Activated CD8-positive, alpha-beta memory T cell treated with anti-CD3 and anti-CD28 coated beads, Interleukin-2, amount 10 ng/mL, durations not matched to agents 7 days and 5 days (primary cell): ENCODE measurements at regions of chr1 and their contacts with region 1.

Region 1: GRCh38 chr1:92485381-92486257 is 1.1 kb downstream of the GFI1 start:
- DNase-seq: peak; percentile 95
- ATAC-seq: peak; percentile 58
- H3K4me3 Mint-ChIP-seq: peak overlapping the region; percentile 95
- H3K27ac Mint-ChIP-seq: peak overlapping the region; percentile 94
- H3K4me1 Mint-ChIP-seq: peaks cover 32% of the 10 kb centered on the region
- H3K27me3 Mint-ChIP-seq: no peaks in the 10 kb centered on the region

Region 2: GRCh38 chr1:92367496-92367895 is 118.1 kb before region 1 on chr1:
- CTCF ChIA-PET with region 1: interaction called, 12 read pairs
- DNase-seq: peak; percentile 51
- ATAC-seq: peak; percentile 49
- H3K4me3 Mint-ChIP-seq: peak overlapping the region; percentile 33
- H3K27ac Mint-ChIP-seq: peak overlapping the region; percentile 91
- H3K4me1 Mint-ChIP-seq: peaks cover 57% of the 10 kb centered on the region
- H3K27me3 Mint-ChIP-seq: no peaks in the 10 kb centered on the region

Region 3: DNA sequence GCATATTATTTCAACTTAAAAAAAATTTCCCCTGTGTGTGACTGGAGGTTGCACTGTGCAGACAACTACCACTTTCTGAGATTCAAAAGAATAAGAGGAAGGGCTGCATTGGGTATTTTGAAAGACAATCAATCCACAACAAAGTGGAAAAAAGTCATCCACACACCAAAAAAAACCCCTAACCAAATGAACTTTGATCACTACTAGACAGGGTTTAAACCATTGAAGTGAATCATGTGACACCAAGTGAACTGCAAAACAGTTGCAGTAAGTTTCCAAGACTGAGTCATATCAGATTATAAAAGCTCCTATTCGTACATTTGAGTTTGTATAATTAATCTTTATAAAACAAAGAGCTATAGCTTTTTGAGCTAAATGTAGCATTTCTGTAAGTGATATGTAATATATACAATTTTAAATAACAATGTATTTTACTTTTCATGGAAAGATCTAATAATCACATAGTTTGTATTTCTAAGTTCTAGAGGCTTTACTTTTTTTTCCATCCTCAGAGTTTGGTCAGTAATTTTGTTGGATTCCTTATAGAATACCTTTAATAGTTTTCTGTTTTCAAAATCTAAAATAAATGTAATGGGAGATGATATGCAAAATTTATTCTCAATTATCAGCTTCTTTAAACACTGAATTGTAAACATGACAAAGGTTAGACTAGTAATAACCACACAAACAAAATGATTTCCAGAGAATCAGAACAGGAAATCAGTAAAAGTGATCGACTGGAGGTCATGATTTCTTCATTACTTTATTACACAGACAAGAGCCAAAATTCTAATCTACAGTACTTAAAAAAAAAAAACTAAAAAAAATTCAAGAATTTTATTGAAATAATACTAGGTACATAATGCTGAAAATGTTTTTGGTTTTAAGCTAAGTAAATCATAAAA is 51.6 kb after region 1 on chr1:
- CTCF ChIA-PET with region 1: interaction called, 70 read pairs
- DNase-seq: no peak
- ATAC-seq: peak; percentile 66
- H3K4me3 Mint-ChIP-seq: peak overlapping the region; percentile 64
- H3K27ac Mint-ChIP-seq: peak overlapping the region; percentile 96
- H3K4me1 Mint-ChIP-seq: peaks cover 74% of the 10 kb centered on the region
- H3K27me3 Mint-ChIP-seq: no peaks in the 10 kb centered on the region

Region 4: GRCh38 chr1:92577261-92577895 is 91.8 kb after region 1 on chr1:
- CTCF ChIA-PET with region 1: interaction called, 44 read pairs
- DNase-seq: peak; percentile 45
- ATAC-seq: peak; percentile 35
- H3K4me3 Mint-ChIP-seq: peak overlapping the region; percentile 81
- H3K27ac Mint-ChIP-seq: peak overlapping the region; percentile 91
- H3K4me1 Mint-ChIP-seq: peaks cover 72% of the 10 kb centered on the region
- H3K27me3 Mint-ChIP-seq: no peaks in the 10 kb centered on the region

Region 5: GRCh38 chr1:92583821-92584760 is 98.5 kb after region 1 on chr1:
- CTCF ChIA-PET with region 1: interaction called, 44 read pairs
- DNase-seq: no peak
- ATAC-seq: peak; percentile 75
- H3K4me3 Mint-ChIP-seq: peak overlapping the region; percentile 72
- H3K27ac Mint-ChIP-seq: peak overlapping the region; percentile 96
- H3K4me1 Mint-ChIP-seq: peaks cover 68% of the 10 kb centered on the region
- H3K27me3 Mint-ChIP-seq: no peaks in the 10 kb centered on the region